A549 (cell line): ENCODE measurements at regions of chr14 and their contacts with region 1.

Region 1: DNA sequence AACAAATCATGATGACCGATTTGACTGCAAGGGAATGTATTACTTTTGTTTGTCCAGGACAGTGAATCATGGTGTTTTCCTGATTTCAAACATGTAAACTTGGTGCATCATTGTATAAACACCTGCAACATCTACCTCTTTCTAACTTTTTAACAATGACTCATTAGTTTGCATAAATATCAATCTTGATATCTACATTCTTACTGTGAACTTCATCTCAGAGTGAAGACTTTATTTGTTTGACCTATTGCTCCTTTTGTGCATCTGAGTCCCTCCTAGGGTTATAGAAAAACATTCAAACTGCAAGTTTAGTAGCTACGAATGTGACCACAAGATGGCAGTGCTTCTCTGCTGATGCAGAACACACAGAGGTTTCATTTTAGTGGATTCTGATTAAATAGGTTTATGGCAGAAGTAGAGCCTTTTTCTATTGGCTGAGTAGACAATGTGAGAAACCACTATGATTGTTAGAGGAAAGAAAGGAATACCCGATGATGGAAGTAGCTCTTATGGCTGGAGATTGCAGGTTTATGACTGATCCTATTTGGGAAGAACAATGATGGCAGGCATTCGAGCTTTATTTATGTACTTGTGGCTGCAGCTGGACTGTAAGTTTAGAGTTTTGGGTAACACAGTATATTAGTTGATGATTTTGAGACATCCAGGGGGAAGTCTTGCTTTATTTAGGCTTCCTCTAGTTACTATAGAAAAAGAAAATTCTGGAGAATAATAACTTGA is 244.2 kb upstream of the OR4E1 start:
- DNase-seq: peak; percentile 43 to 92
- ATAC-seq: peak; percentile 85 to 86
- H3K4me3 ChIP-seq: no peak overlapping the region
- H3K27ac ChIP-seq: no peak overlapping the region
- H3K4me1 ChIP-seq: peaks cover 40% of the 10 kb centered on the region
- CTCF ChIP-seq: peak; percentile 86
- EP300 ChIP-seq: peak; percentile 54 to 87; a peak in 3 of 5 replicates
- POLR2A ChIP-seq: no peak
- RAD21 ChIP-seq: peak; percentile 77 to 88

Region 2: DNA sequence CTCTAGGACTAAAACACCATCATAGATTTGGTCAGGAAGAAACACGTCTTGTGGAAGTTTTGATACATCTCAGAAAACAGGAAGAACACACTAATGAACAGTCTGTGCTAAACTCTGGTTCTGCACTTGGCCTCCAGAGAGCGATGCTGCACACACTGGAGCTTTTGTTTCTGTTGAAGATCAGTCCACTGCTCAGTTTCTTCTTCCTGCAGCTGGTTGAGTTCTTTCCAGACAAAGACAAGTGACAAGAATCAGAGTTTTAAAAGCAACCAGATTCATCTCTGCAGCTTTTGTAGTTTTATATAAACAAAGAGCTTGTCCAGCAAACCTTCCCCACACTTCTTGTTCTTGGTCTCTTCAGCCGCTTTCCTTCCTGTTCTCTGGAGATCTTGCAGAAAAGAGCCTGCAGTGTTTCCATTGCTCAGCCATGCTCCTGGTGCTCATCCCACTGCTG is 15.2 kb before region 1 on chr14:
- CTCF ChIA-PET with region 1: interaction called, 21 read pairs
- POLR2A ChIA-PET with region 1: no interaction called
- DNase-seq: peak in 1 of 2 experiments; percentile 17
- ATAC-seq: peak; percentile 71 to 73; a peak in 5 of 6 replicates
- H3K4me3 ChIP-seq: no peak overlapping the region
- H3K27ac ChIP-seq: no peak overlapping the region
- H3K4me1 ChIP-seq: no peaks in the 10 kb centered on the region
- CTCF ChIP-seq: peak; percentile 27; the same call in 1 of the 3 replicates
- EP300 ChIP-seq: no peak
- POLR2A ChIP-seq: no peak
- RAD21 ChIP-seq: no peak

Region 3: DNA sequence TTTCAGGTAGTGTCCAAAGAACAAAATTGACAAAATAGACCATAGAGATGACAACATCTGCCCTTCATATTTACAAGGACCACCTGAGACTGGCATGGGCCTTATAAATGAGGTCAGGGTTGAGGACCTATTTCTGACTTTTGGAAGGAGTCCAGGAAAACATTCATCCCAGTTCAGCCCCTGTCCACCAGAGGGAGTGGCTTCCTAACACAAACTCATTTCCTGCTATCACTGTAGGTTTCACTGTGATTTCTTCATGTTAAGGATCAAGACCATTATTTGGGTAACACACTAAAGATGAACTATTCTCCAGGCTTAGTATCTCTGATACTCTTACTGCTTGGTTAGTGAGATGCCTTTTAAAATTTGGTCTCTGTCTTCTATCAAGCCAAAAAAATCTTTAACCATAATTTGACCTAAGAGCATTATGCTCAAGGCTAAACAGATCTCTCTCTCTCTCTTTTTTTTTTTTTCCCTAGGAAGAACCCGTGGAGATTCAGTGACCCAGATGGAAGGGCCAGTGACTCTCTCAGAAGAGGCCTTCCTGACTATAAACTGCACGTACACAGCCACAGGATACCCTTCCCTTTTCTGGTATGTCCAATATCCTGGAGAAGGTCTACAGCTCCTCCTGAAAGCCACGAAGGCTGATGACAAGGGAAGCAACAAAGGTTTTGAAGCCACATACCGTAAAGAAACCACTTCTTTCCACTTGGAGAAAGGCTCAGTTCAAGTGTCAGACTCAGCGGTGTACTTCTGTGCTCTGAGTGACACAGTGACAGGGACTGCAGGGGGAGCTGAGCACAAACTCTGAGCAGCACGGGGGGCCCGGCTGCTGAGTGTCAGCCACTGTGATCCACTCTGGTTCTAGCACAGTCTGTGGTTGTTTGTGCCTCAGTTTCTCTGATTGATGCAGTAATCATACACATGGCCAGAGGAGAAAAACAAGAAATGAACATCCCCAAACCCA is 23.3 kb after region 1 on chr14:
- CTCF ChIA-PET with region 1: interaction called, 11 read pairs
- POLR2A ChIA-PET with region 1: no interaction called
- DNase-seq: peak; percentile 18 to 56
- ATAC-seq: peak; percentile 64 to 77; a peak in 5 of 6 replicates
- H3K4me3 ChIP-seq: no peak overlapping the region
- H3K27ac ChIP-seq: no peak overlapping the region
- H3K4me1 ChIP-seq: no peaks in the 10 kb centered on the region
- CTCF ChIP-seq: no peak
- EP300 ChIP-seq: no peak
- POLR2A ChIP-seq: no peak
- RAD21 ChIP-seq: peak in 1 of 2 experiments; percentile 21; a peak in 1 of 5 replicates